MCF 10A (cell line): ENCODE measurements at regions of chr2 and their contacts with region 1.

Region 1: DNA sequence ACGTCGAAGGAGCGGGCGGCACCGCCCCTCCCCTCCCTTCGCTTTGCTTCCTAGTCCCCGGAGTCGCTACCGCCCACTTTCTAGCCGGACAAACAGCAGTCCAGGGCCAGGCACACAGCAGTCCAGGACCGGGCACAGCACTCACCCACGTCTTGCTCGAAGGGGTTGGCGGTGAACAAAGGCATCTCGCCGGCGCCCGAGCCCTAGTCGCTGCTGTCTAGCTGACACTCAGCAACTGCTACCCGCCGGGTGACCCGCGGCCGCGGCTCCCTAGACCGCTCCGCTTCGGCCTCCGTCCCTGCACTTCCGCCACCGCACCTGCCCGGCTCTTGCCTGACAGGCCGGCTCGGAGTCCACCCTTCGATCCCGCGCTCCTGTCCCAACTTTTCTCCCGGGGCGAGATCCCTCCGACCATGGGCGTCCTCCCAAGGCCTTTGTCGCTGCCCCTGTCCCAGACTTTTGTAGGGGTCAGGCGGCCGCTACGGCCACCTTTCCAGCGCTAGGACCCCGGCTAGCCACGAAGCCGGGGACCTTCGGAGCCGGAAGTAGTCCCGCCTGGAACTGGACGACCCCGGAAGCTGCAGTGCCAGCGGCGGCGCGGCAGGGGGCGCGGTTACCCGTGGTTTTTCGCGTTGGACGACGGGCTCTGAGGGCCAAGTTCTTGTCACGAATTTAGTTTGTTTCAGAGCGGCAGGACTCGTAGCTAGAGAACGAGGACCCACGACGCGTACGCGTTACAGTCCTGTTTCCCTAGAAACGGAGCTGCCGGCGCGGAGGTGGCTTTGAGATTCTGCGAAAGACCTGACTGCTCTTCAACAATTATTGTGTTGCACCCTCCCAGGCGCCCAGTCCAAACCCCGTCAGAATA is at the start of gene STAM2:
- DNase-seq: peak; percentile 92
- H3K4me3 Mint-ChIP-seq: peak within 1 kb of the TSS; percentile 94
- H3K27ac Mint-ChIP-seq: peak within 1 kb of the TSS; percentile 100
- H3K4me1 Mint-ChIP-seq: peaks cover 16% of the 10 kb centered on the region
- H3K27me3 Mint-ChIP-seq: no peaks in the 10 kb centered on the region
- CTCF ChIP-seq: peak; percentile 97
- total RNA-seq, gene STAM2: 27.6 and 35.3 TPM in 2 replicates

Region 2: DNA sequence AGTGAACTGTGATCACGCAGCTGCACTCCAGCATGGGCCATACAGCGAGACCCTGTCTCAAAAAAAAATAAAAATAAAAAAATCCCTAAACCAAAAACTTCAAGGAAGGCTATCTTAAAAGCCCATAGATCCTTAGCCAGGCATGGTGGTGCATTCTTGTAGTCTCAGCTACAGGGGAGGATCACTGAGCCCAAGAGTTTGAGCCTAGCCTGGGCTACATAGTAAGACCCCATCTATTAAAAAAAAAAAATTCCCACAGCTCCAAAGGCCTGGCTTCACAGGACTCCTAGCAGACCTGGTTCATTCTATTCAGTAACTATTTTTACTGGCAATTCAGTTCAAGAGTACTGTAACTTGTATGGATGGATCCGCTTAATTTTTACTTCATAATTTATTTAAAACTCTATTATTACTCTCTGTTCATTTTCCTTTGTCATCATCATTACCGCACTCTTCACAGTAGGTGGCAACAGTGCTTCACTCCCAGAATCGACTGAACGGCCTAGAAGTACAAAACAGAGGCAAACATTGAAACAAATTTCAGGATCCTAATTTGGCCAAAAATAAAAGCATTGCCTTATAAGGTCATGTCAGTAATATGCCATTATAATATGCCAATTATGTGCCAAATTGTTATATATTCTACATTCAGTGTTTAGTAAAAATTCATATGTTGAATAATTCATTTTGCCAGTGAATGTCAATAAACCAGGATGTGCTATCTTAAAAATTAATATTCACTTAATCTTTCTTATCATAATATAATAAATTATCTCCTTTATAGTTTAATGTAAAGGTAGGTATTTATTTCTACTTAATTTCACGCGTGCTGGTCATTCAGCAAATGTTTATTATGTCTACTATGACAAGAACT is 14.2 kb after region 1 on chr2:
- CTCF ChIA-PET with region 1: interaction called, 25 read pairs
- POLR2A ChIA-PET with region 1: interaction called, 4 read pairs
- intact Hi-C with region 1: no loop called
- DNase-seq: peak; percentile 85
- H3K4me3 Mint-ChIP-seq: no peak overlapping the region
- H3K27ac Mint-ChIP-seq: no peak overlapping the region
- H3K4me1 Mint-ChIP-seq: no peaks in the 10 kb centered on the region
- H3K27me3 Mint-ChIP-seq: no peaks in the 10 kb centered on the region
- CTCF ChIP-seq: peak; percentile 84

Region 3: DNA sequence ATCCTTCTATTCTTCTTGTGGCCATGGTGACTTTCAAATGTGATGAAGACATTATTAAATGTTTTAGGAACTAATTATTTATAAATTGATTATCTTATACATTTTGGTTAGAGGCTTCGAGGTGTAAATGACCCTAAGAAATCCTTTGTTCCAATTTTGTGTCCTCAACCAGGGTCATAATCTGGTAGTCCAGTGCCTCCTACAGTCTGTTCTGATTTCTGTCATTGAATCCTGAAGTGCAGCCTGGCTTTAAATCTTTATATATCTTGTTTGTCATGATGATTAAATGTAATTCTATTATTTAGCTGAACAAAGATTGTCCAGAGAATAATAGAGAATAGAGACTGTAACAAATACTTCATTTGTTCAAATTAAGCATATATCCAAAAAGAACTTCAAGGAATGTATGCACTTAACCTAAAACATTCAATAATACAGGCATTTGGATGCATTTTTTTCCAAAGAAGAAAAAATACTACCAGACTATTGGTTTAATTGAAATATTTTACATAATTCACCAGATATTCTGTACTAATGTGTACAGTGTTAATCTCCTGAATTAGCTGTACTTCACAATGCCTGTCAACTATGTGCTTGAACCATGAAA is 451.8 kb after region 1 on chr2:
- CTCF ChIA-PET with region 1: interaction called, 99 read pairs
- POLR2A ChIA-PET with region 1: interaction called, 8 read pairs
- intact Hi-C with region 1: loop called (anchors 2 kb)
- DNase-seq: peak; percentile 39
- H3K4me3 Mint-ChIP-seq: no peak overlapping the region
- H3K27ac Mint-ChIP-seq: no peak overlapping the region
- H3K4me1 Mint-ChIP-seq: no peaks in the 10 kb centered on the region
- H3K27me3 Mint-ChIP-seq: no peaks in the 10 kb centered on the region
- CTCF ChIP-seq: peak; percentile 52

Region 4: GRCh38 chr2:152648336-152648735 is 472.6 kb after region 1 on chr2:
- CTCF ChIA-PET with region 1: interaction called, 7 read pairs
- POLR2A ChIA-PET with region 1: interaction called, 14 read pairs
- intact Hi-C with region 1: no loop called
- DNase-seq: no peak
- H3K4me3 Mint-ChIP-seq: no peak overlapping the region
- H3K27ac Mint-ChIP-seq: no peak overlapping the region
- H3K4me1 Mint-ChIP-seq: peaks cover 6% of the 10 kb centered on the region
- H3K27me3 Mint-ChIP-seq: no peaks in the 10 kb centered on the region
- CTCF ChIP-seq: peak; percentile 20

Region 5: GRCh38 chr2:152740743-152741328 is 565.1 kb after region 1 on chr2:
- CTCF ChIA-PET with region 1: interaction called, 4 read pairs
- POLR2A ChIA-PET with region 1: interaction called, 7 read pairs
- intact Hi-C with region 1: loop called (anchors 10 kb)
- DNase-seq: peak; percentile 63
- H3K4me3 Mint-ChIP-seq: no peak overlapping the region
- H3K27ac Mint-ChIP-seq: no peak overlapping the region
- H3K4me1 Mint-ChIP-seq: no peaks in the 10 kb centered on the region
- H3K27me3 Mint-ChIP-seq: no peaks in the 10 kb centered on the region
- CTCF ChIP-seq: peak; percentile 81

Region 6: GRCh38 chr2:153077311-153077710 is 901.6 kb after region 1 on chr2:
- CTCF ChIA-PET with region 1: no interaction called
- POLR2A ChIA-PET with region 1: no interaction called
- intact Hi-C with region 1: no loop called
- DNase-seq: no peak
- H3K4me3 Mint-ChIP-seq: no peak overlapping the region
- H3K27ac Mint-ChIP-seq: no peak overlapping the region
- H3K4me1 Mint-ChIP-seq: no peaks in the 10 kb centered on the region
- H3K27me3 Mint-ChIP-seq: no peaks in the 10 kb centered on the region
- CTCF ChIP-seq: no peak